ENCODE measurements at regions of chr9 and their contacts with region 1.

Region 1: DNA sequence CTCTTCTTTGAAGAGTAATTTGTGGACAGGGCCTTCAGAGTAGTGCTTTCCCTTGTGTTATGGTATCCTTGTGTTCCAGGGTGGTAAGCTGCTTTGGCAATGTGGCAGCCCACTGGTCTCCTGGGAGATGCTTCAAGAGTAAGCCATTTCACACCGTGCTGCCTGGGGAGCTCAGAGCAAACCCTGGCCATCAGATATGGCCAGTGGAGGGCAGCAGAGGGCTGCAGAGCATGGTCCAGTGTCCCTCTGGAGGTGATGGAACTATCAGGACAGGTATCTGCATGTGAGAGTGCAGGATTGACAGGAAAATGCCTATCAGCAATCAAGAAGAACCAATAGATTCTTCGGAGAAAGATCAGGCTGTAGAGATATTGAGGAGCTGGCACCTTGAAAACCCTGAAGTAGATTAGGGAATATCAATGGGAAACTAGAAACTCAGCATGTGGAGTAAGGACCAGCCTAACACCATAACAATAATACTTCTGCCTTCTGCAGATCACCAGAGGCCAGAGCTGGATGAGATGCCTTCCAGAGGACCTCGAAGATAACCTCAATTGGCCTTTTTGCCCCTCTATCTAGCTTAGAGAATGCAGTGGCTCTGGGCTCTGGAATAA is 90.8 kb downstream of the PLPPR1 start:
- DNase-seq: peak; percentile 32
- ATAC-seq: peak; percentile 70 to 79

Region 2: GRCh38 chr9:101235105-101235866 is 116.0 kb after region 1 on chr9:
- intact Hi-C with region 1: loop called (anchors 1 to 2 kb)
- DNase-seq: no peak
- ATAC-seq: peak in 1 of 2 donors; percentile 49

Region 3: GRCh38 chr9:101311758-101312420 is 192.6 kb after region 1 on chr9:
- intact Hi-C with region 1: loop called (anchors 5 to 10 kb)
- DNase-seq: no peak
- ATAC-seq: peak in 1 of 2 donors; percentile 22